Activated CD4-positive, alpha-beta memory T cell treated with anti-CD3 and anti-CD28 coated beads for 36 hours (primary cell): ENCODE measurements at regions of chr11 and their contacts with region 1.

Region 1: DNA sequence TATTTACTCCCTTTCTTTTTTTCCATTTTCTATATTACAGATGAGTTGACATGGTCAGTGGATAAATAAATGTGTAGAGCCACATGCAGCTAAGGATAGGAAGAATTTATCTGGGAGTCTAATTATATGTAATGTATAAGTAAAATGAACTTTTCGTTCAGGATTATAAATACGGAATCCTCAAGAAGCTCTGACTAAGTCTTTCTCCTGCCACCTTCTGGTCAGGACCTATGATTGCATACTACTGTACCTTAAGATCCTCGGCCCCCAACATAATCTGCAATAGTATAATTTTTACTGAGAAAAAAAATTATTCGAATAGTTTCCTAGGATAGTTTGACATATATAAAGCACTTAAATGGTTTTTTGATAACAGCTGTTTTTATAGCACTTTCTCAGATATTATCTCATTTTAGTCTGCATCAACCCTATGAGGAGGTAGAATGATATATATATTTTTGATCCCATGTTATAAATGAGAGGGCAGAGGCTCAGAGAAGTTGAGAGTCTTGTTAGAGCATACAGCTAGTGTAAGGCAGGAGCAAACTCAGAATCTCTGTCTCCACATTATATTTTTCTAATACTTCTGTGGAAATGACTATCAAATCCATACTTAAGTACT is 36.1 kb downstream of the CCDC90B start:
- DNase-seq: no peak
- H3K4me3 Mint-ChIP-seq: no peak overlapping the region
- H3K27ac Mint-ChIP-seq: no peak overlapping the region
- H3K4me1 Mint-ChIP-seq: no peaks in the 10 kb centered on the region
- H3K27me3 Mint-ChIP-seq: no peaks in the 10 kb centered on the region

Region 2: GRCh38 chr11:82750643-82751139 is 499.4 kb before region 1 on chr11:
- CTCF ChIA-PET with region 1: no interaction called
- POLR2A ChIA-PET with region 1: no interaction called
- intact Hi-C with region 1: no loop called
- DNase-seq: peak; percentile 25
- H3K4me3 Mint-ChIP-seq: no peak overlapping the region
- H3K27ac Mint-ChIP-seq: no peak overlapping the region
- H3K4me1 Mint-ChIP-seq: peaks cover 20% of the 10 kb centered on the region
- H3K27me3 Mint-ChIP-seq: no peaks in the 10 kb centered on the region

Region 3: GRCh38 chr11:82906244-82906654 is 343.8 kb before region 1 on chr11:
- CTCF ChIA-PET with region 1: interaction called, 15 read pairs
- POLR2A ChIA-PET with region 1: no interaction called
- intact Hi-C with region 1: loop called (anchors 1 kb)
- DNase-seq: no peak
- H3K4me3 Mint-ChIP-seq: no peak overlapping the region
- H3K27ac Mint-ChIP-seq: no peak overlapping the region
- H3K4me1 Mint-ChIP-seq: peaks cover 38% of the 10 kb centered on the region
- H3K27me3 Mint-ChIP-seq: no peaks in the 10 kb centered on the region

Region 4: DNA sequence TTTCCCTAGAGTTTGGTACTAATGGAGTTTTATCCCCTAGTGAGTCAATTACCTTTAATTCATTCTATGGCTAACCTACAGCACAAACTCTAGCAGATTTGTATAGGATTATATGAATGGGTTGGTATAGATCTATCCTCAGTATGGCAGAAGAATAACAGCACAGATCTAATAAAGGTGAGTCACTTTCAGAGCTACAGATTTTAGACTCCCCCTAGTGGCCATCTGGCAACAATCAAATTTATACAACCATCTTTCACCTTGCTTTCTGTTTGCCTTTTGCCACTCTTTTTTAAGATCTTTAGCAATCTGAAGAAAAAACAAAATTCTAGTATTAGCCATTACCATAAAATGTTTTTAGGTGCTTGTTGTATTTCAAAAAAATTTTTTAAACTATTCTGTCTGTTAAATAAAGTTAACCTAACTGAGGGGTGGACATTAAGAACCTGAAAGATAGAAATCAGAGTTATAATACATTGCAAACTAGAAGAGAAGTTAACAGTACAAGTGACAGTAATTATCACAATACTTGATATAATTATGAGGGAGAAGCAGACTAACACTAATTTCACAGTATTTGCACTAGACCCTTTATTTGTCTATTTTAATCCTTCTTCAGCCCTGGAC is 322.7 kb before region 1 on chr11:
- CTCF ChIA-PET with region 1: interaction called, 14 read pairs
- POLR2A ChIA-PET with region 1: no interaction called
- intact Hi-C with region 1: no loop called
- DNase-seq: no peak
- H3K4me3 Mint-ChIP-seq: no peak overlapping the region
- H3K27ac Mint-ChIP-seq: no peak overlapping the region
- H3K4me1 Mint-ChIP-seq: peaks cover 14% of the 10 kb centered on the region
- H3K27me3 Mint-ChIP-seq: no peaks in the 10 kb centered on the region

Region 5: GRCh38 chr11:83193315-83194280 is 56.5 kb before region 1 on chr11 and contains the start of gene ANKRD42:
- CTCF ChIA-PET with region 1: interaction called, 7 read pairs
- POLR2A ChIA-PET with region 1: no interaction called
- intact Hi-C with region 1: loop called (anchors 2 kb)
- DNase-seq: peak; percentile 93
- H3K4me3 Mint-ChIP-seq: peak within 1 kb of the TSS; percentile 99
- H3K27ac Mint-ChIP-seq: peak within 1 kb of the TSS; percentile 98
- H3K4me1 Mint-ChIP-seq: peaks cover 38% of the 10 kb centered on the region
- H3K27me3 Mint-ChIP-seq: no peaks in the 10 kb centered on the region
- total RNA-seq, gene ANKRD42: 3.8 to 5.4 TPM

Region 6: DNA sequence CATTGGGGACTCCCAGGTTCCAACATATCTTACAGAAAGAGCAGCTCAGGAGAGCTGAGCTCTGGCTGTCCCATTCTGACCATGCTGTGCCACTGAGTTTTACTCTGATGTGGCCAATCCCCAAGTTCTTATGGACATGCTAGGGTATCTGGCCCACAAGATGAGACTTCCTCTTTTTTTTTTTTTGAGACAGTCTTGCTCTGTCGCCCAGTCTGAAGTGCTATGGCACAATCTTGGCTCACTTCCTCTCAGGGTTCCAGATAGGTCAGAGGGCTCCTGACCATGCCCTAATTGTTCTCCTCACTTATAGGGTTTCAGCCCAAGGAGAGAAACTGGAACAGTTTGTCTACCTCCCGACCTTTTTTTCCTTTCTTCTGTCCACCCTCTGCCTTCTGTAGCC is 188.4 kb after region 1 on chr11:
- CTCF ChIA-PET with region 1: no interaction called
- POLR2A ChIA-PET with region 1: no interaction called
- intact Hi-C with region 1: no loop called
- DNase-seq: no peak
- H3K4me3 Mint-ChIP-seq: no peak overlapping the region
- H3K27ac Mint-ChIP-seq: no peak overlapping the region
- H3K4me1 Mint-ChIP-seq: no peaks in the 10 kb centered on the region
- H3K27me3 Mint-ChIP-seq: no peaks in the 10 kb centered on the region

Region 7: GRCh38 chr11:83656931-83657330 is 406.8 kb after region 1 on chr11:
- CTCF ChIA-PET with region 1: no interaction called
- POLR2A ChIA-PET with region 1: no interaction called
- intact Hi-C with region 1: no loop called
- DNase-seq: no peak
- H3K4me3 Mint-ChIP-seq: no peak overlapping the region
- H3K27ac Mint-ChIP-seq: no peak overlapping the region
- H3K4me1 Mint-ChIP-seq: no peaks in the 10 kb centered on the region
- H3K27me3 Mint-ChIP-seq: peaks cover 3% of the 10 kb centered on the region